ENCODE measurements at regions of chr12 and their contacts with region 1.

Region 1: GRCh38 chr12:77065361-77066204 is at the start of gene E2F7:
- DNase-seq: peak; percentile 76 to 88 (median 86)
- H3K4me3 ChIP-seq: peak within 1 kb of the TSS; percentile 67
- H3K27ac ChIP-seq: peak within 1 kb of the TSS in 1 of 2 donors; percentile 40
- H3K4me1 ChIP-seq: no peaks in the 10 kb centered on the region
- H3K27me3 ChIP-seq: no peaks in the 10 kb centered on the region
- CTCF ChIP-seq: no peak
- EP300 ChIP-seq: no peak
- POLR2A ChIP-seq: no peak
- total RNA-seq, gene E2F7: 0.17 to 1.3 (median 0.45) TPM in 5 of 7 donors, not detected in the others

Region 2: DNA sequence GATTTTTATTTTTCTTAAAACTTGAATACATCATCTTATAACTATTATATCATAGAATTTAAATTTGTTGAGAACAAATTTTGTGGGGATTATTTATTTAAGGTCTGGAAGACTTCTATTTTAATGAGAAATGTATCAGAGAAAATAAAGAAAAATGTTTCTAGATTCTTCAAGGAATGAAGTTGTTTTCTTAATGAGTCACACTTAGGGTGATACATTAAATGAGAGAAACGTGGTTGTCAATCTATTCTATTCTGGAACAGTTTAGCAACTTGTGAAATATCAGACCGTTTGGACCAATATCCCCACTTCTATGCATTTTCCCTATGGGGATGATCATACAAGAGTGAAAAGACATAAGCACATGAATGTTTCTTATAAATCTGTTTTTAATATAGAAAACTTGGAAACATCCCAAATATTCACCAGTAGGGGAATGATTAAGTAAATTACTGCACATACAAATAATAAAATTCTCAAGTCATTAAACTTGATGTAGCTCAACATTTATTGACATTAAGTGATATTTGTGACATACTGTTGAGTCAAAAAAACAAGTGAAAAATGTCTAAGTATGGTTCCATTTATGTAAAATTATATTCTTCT is 88.7 kb before region 1 on chr12:
- intact Hi-C with region 1: no loop called
- DNase-seq: no peak
- H3K4me3 ChIP-seq: no peak overlapping the region
- H3K27ac ChIP-seq: no peak overlapping the region
- H3K4me1 ChIP-seq: no peaks in the 10 kb centered on the region
- H3K27me3 ChIP-seq: no peaks in the 10 kb centered on the region
- CTCF ChIP-seq: no peak
- EP300 ChIP-seq: no peak
- POLR2A ChIP-seq: no peak

Region 3: GRCh38 chr12:77685112-77685511 is 619.5 kb after region 1 on chr12:
- intact Hi-C with region 1: loop called in 1 of 4 experiments (anchors 10 kb)
- DNase-seq: peak; percentile 55 to 79 (median 61)
- H3K4me3 ChIP-seq: no peak overlapping the region
- H3K27ac ChIP-seq: no peak overlapping the region
- H3K4me1 ChIP-seq: peaks cover under 1% of the 10 kb centered on the region
- H3K27me3 ChIP-seq: no peaks in the 10 kb centered on the region
- CTCF ChIP-seq: peak in 2 of 3 donors; percentile 45 to 51
- EP300 ChIP-seq: no peak
- POLR2A ChIP-seq: no peak

Region 4: DNA sequence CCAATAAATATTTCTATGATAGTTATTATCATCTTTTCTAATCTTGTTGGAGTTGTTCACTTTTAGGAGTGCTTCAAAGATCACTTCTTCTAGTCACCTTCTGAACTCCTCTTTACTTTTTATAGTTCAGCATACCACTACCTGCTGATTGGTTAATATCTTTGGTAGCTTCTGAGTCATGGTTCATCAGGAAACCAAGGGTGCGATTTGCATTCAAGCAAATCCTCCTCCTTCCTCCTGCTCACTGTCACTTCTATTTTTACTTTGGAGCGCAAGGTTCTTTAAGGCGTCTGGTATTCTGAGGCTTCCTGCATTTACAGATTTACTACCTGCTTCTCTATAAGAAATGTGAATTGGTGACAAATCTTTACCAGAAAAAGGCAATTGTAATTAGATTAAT is 1823.0 kb after region 1 on chr12:
- intact Hi-C with region 1: loop called in 1 of 4 experiments (anchors 10 kb)
- DNase-seq: no peak
- H3K4me3 ChIP-seq: no peak overlapping the region
- H3K27ac ChIP-seq: no peak overlapping the region
- H3K4me1 ChIP-seq: no peaks in the 10 kb centered on the region
- H3K27me3 ChIP-seq: no peaks in the 10 kb centered on the region
- CTCF ChIP-seq: no peak
- EP300 ChIP-seq: no peak
- POLR2A ChIP-seq: no peak

Measured in ovary (tissue), 10 donors.